ENCODE measurements at regions of chr14 and their contacts with region 1.

Region 1: GRCh38 chr14:102316743-102317563 is 2.6 kb upstream of the ZNF839 start:
- DNase-seq: peak; percentile 96
- H3K4me3 Mint-ChIP-seq: peak overlapping the region; percentile 80
- H3K27ac Mint-ChIP-seq: peak overlapping the region; percentile 84
- H3K4me1 Mint-ChIP-seq: peaks cover 70% of the 10 kb centered on the region
- H3K27me3 Mint-ChIP-seq: no peaks in the 10 kb centered on the region

Region 2: DNA sequence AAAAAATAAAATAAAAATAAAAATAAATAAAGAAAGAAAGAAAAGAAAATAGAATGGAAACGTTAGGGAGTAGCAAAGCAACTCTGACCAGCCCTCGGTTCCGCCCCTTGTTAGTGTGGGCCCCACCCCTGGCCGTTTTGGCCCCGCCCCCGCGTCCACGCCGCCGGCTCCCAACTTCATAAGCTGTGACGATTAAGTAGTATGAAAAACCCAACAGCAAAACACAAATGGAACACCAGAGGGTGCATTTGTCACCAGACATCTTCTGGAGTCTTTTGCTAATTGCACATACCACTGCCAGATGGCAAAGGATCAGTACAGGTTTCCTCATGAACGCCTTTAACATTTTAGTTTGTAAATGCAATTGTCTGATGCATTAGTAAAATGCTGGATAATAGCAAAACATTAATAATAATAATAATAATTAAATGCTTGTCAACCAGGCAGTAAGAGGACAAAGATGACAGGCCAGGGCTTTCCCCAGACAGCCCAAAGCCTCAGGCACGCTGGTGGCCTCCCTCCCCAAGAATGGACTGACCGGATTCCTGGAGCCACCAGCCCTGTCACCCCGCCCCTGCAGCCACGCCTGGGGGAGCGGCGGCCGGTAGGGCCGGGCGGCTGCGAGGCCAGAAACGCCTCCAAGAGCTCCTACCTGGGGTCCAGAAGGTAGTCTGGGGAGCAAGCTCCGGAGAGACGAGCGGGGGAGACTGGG is 253.7 kb before region 1 on chr14:
- CTCF ChIA-PET with region 1: interaction called, 13 read pairs
- POLR2A ChIA-PET with region 1: no interaction called
- DNase-seq: peak; percentile 75
- H3K4me3 Mint-ChIP-seq: no peak overlapping the region
- H3K27ac Mint-ChIP-seq: no peak overlapping the region
- H3K4me1 Mint-ChIP-seq: peaks cover 9% of the 10 kb centered on the region
- H3K27me3 Mint-ChIP-seq: peaks cover under 1% of the 10 kb centered on the region

Region 3: GRCh38 chr14:102215071-102215470 is 101.9 kb before region 1 on chr14:
- CTCF ChIA-PET with region 1: no interaction called
- POLR2A ChIA-PET with region 1: no interaction called
- DNase-seq: no peak
- H3K4me3 Mint-ChIP-seq: no peak overlapping the region
- H3K27ac Mint-ChIP-seq: no peak overlapping the region
- H3K4me1 Mint-ChIP-seq: peaks cover 5% of the 10 kb centered on the region
- H3K27me3 Mint-ChIP-seq: no peaks in the 10 kb centered on the region

Region 4: GRCh38 chr14:102272392-102272791 is 44.6 kb before region 1 on chr14:
- CTCF ChIA-PET with region 1: no interaction called
- POLR2A ChIA-PET with region 1: no interaction called
- DNase-seq: no peak
- H3K4me3 Mint-ChIP-seq: no peak overlapping the region
- H3K27ac Mint-ChIP-seq: no peak overlapping the region
- H3K4me1 Mint-ChIP-seq: no peaks in the 10 kb centered on the region
- H3K27me3 Mint-ChIP-seq: no peaks in the 10 kb centered on the region

Region 5: DNA sequence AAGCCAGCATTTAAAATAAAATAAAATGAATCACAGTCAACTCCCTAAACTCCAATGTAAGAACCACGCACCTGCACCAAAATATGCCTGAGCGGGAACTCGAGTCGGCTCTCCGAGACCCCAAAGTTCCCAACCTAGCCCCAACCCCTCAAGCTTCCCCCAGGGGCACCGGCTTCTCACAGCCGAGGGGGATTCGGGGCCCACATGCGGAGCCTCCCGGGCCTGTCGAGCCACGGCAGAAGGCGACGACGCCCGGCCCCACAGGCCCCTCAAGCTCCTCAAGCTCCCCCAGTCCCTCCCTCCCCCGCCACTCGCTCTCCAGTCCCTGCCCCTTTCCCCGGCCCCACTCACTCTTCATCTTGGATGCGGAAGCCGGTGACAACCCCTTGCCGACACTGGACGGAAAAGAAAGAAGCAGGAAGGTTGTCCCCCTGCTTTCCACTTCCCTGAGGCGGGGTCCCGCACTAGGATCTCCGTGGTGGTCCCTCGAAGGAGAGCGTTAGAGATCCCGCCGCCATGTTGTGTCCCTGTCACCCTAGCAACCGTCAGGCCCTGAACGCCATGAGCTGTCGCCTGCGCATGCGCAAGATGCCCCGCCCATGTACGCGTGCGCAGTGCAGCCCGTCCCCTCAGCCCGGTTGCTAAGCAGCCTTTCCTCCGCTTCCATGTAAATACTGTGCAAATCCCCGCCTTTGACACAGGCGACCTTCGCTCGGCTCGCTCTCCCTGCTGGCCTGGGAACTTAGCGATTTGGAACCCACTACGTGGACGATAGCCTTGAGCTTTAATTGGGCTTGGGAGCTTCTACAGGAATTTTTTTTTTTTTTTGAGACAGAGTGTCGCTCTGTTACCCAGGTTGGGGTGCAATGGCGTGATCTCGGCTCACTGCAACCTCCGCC is 12.1 kb before region 1 on chr14 and contains the start of gene MOK:
- CTCF ChIA-PET with region 1: interaction called, 35 read pairs
- POLR2A ChIA-PET with region 1: interaction called, 11 read pairs
- DNase-seq: peak; percentile 97
- H3K4me3 Mint-ChIP-seq: peak within 1 kb of the TSS; percentile 90
- H3K27ac Mint-ChIP-seq: peak within 1 kb of the TSS; percentile 57
- H3K4me1 Mint-ChIP-seq: peaks cover 10% of the 10 kb centered on the region
- H3K27me3 Mint-ChIP-seq: peaks cover 3% of the 10 kb centered on the region
- total RNA-seq, gene MOK: 0.88 to 1.4 TPM

Region 6: GRCh38 chr14:102362545-102363181 is 45.7 kb after region 1 on chr14 and contains the starts of genes CINP and TECPR2:
- CTCF ChIA-PET with region 1: interaction called, 11 read pairs
- POLR2A ChIA-PET with region 1: interaction called, 52 read pairs
- DNase-seq: peak; percentile 97
- H3K4me3 Mint-ChIP-seq: peak within 1 kb of the TSS; percentile 92
- H3K27ac Mint-ChIP-seq: peak within 1 kb of the TSS; percentile 88
- H3K4me1 Mint-ChIP-seq: peaks cover 27% of the 10 kb centered on the region
- H3K27me3 Mint-ChIP-seq: no peaks in the 10 kb centered on the region
- total RNA-seq, gene CINP: 27.3 to 29.8 TPM
- total RNA-seq, gene TECPR2: 12.3 to 12.5 TPM